CD4-positive, alpha-beta T cell (primary cell): ENCODE measurements at regions of chr5 and their contacts with region 1.

Region 1: DNA sequence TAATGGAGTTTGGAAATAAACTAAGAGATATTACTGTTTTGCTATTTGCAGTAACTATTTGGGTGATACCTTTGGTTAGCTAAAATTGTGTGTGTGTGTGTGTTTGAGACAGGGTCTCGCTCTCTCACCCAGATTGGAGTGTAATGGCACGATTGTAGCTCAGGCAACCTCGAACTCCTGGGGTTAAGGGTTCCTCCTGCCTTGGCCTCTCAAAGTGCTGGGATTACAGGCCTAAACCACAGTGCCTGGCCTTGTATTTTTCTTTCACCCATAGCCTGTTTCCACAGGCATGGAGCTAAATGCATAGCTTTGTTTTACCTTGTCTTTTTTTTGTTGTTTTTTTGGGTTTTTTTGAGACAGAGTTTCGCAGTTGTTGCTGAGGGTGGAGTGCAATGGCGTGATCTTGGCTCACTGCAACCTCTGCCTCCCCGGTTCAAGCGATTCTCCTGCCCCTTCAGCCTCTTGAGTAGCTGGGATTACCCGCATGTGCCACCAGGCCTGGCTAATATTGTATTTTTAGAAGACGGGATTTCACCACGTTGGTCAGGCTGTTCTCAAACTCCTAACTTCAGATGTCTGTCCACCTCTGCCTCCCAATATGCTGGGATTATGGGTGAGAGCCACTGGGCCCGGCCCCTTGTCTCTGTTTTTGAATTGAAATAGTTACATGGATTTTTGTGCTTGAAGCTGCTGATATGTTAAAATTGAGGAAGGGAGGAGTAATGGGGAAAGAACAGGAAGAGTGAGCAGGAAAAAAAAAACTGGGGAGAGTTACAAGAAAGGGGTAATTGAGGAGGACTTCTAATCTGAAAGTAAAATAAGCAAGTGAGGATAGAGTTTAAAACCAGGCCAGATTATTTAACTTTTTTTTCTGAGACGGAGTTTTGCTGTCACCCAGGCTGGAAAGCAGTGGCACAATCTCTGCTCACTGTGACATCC is 5.7 kb downstream of the GPBP1 start:
- DNase-seq: no peak
- ATAC-seq: no peak
- H3K4me3 ChIP-seq: peak overlapping the region; percentile 91
- H3K4me3 Mint-ChIP-seq: peak overlapping the region; percentile 98
- H3K27ac ChIP-seq: peak overlapping the region in 1 of 2 donors; percentile 3
- H3K27ac Mint-ChIP-seq: peak overlapping the region; percentile 96
- H3K4me1 ChIP-seq: peaks cover 62% of the 10 kb centered on the region
- H3K4me1 Mint-ChIP-seq: peaks cover 72% of the 10 kb centered on the region
- H3K27me3 ChIP-seq: no peaks in the 10 kb centered on the region
- H3K27me3 Mint-ChIP-seq: no peaks in the 10 kb centered on the region
- CTCF ChIP-seq: no peak

Region 2: GRCh38 chr5:56588636-56589480 is 590.7 kb before region 1 on chr5:
- CTCF ChIA-PET with region 1: no interaction called
- POLR2A ChIA-PET with region 1: no interaction called
- intact Hi-C with region 1: no loop called
- DNase-seq: peak; percentile 32 to 92 (median 60)
- ATAC-seq: peak; percentile 72
- H3K4me3 ChIP-seq: no peak overlapping the region
- H3K4me3 Mint-ChIP-seq: peak overlapping the region; percentile 52
- H3K27ac ChIP-seq: peak overlapping the region; percentile 60 to 95
- H3K27ac Mint-ChIP-seq: peak overlapping the region; percentile 87
- H3K4me1 ChIP-seq: peaks cover 51% of the 10 kb centered on the region
- H3K4me1 Mint-ChIP-seq: peaks cover 62% of the 10 kb centered on the region
- H3K27me3 ChIP-seq: no peaks in the 10 kb centered on the region
- H3K27me3 Mint-ChIP-seq: no peaks in the 10 kb centered on the region
- CTCF ChIP-seq: no peak

Region 3: DNA sequence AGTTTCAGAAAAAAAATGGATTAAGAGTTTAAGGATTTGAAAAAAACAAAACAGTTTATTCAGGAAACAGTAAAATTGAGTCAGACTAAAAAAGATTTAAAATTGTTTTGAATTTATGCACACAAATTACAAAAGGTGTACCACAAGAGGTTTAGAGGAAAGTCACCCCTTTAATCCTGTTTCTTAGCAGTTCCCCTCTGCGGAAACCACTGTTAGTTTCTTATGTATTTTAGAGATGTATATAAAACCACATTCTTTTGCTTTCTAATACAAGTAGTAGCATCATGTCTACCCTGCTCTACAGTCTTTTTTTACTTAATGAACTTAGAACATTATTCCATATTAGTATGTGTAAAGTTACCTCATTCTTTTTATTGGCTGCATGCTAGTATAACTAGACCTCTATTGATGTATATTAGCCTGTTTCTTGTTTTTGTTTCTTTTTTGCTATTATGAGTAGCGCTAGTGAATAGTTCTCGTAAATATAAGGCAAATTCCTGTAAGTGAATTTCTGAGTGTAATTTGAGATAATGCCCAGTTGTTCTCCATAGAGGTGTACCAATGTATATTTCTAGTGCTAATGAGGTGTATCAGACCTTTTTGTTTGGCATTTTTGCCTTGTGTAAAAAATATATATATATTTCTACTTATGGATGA is 14.4 kb after region 1 on chr5:
- CTCF ChIA-PET with region 1: interaction called, 5 read pairs
- POLR2A ChIA-PET with region 1: interaction called, 4 read pairs
- intact Hi-C with region 1: loop called (anchors 2 kb)
- DNase-seq: peak in 2 of 14 experiments; percentile 43 to 46
- ATAC-seq: peak; percentile 63
- H3K4me3 ChIP-seq: no peak overlapping the region
- H3K4me3 Mint-ChIP-seq: peak overlapping the region; percentile 65
- H3K27ac ChIP-seq: no peak overlapping the region
- H3K27ac Mint-ChIP-seq: peak overlapping the region; percentile 77
- H3K4me1 ChIP-seq: peaks cover 54% of the 10 kb centered on the region
- H3K4me1 Mint-ChIP-seq: peaks cover 75% of the 10 kb centered on the region
- H3K27me3 ChIP-seq: no peaks in the 10 kb centered on the region
- H3K27me3 Mint-ChIP-seq: no peaks in the 10 kb centered on the region
- CTCF ChIP-seq: no peak